SK-N-SH (cell line): ENCODE measurements at regions of chr17 and their contacts with region 1.

Region 1: DNA sequence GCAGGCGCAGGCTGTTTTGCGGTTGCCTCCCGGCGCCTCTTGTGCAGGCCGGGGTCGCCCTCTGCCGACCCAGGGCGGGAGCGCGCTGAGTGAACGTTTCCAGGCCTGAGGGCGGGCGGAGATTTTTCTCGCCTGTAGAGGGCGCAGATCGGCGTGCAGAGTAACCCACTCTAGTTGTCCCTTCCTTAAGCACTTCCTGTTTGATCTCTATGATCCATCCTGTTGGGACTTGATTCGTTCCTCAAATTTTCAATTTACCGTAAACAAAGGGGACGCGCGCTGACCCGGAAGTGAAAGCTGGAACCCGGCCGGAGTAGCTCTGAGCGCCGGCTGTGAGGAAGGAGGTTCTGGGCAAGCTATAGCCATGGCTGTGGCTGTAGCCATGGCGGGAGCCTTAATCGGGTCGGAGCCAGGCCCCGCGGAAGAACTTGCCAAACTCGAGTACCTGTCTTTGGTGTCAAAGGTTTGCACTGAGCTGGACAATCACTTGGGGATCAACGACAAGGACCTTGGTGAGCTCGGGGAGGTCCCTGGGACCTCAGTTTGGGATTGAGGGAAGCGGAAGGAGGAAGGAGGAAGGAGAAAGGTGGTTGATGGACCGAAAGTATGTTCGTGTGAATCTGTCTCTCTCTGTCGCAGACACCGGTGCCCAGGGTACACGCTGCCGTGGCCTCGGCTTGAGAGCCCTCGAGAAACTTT is at the start of gene DHX8:
- DNase-seq: peak; percentile 90
- H3K4me3 ChIP-seq: peak within 1 kb of the TSS; percentile 81 to 97
- H3K27ac ChIP-seq: peak within 1 kb of the TSS; percentile 81 to 87
- H3K4me1 ChIP-seq: peaks cover 3 to 8% of the 10 kb centered on the region in 2 experiments; a peak in 2 of 4 replicates
- H3K27me3 ChIP-seq: no peaks in the 10 kb centered on the region
- CTCF ChIP-seq: peak; percentile 100
- EP300 ChIP-seq: peak; percentile 8 to 72; a peak in 2 of 4 replicates
- RAD21 ChIP-seq: peak; percentile 100
- polyA plus RNA-seq, gene DHX8: 31.3 and 35.1 TPM in 2 replicates

Region 2: GRCh38 chr17:43381204-43381603 is 102.6 kb before region 1 on chr17:
- CTCF ChIA-PET with region 1: interaction called, 70 read pairs
- POLR2A ChIA-PET with region 1: no interaction called
- DNase-seq: no peak
- H3K4me3 ChIP-seq: no peak overlapping the region
- H3K27ac ChIP-seq: no peak overlapping the region
- H3K4me1 ChIP-seq: no peaks in the 10 kb centered on the region
- H3K27me3 ChIP-seq: no peaks in the 10 kb centered on the region
- CTCF ChIP-seq: no peak
- EP300 ChIP-seq: no peak
- RAD21 ChIP-seq: no peak

Region 3: GRCh38 chr17:43406676-43407645 is 76.9 kb before region 1 on chr17:
- CTCF ChIA-PET with region 1: interaction called, 30 read pairs
- POLR2A ChIA-PET with region 1: no interaction called
- DNase-seq: no peak
- H3K4me3 ChIP-seq: no peak overlapping the region
- H3K27ac ChIP-seq: peak overlapping the region; percentile 12 to 62; a peak in 3 of 4 replicates
- H3K4me1 ChIP-seq: peaks cover 11 to 14% of the 10 kb centered on the region in 2 experiments
- H3K27me3 ChIP-seq: no peaks in the 10 kb centered on the region
- CTCF ChIP-seq: no peak; the same call in 1 of the 2 replicates
- EP300 ChIP-seq: peak in 1 of 2 experiments; percentile 60; a peak in 1 of 4 replicates
- RAD21 ChIP-seq: no peak

Region 4: DNA sequence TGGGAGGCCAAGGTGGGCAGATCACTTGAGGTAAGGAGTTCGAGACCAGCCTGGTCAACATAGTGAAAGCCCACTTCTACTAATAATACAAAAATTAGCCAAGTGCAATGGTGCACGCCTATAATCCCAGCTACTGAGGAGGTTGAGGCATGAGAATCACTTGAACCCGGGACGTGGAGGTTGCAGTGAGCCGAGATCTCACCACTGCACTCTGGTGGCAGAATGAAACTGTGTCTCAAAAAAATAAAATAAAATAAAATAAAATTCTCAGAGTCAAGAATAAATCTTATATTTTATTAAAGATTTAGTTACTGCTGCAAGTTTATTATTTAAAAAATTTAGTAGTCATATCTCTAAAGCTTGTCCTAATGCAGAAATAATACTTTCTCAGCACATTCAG is 55.3 kb before region 1 on chr17:
- CTCF ChIA-PET with region 1: interaction called, 13 read pairs
- POLR2A ChIA-PET with region 1: no interaction called
- DNase-seq: no peak
- H3K4me3 ChIP-seq: no peak overlapping the region
- H3K27ac ChIP-seq: no peak overlapping the region
- H3K4me1 ChIP-seq: peaks cover 0 to 7% of the 10 kb centered on the region in 2 experiments; a peak in 1 of 4 replicates
- H3K27me3 ChIP-seq: no peaks in the 10 kb centered on the region
- CTCF ChIP-seq: peak; percentile 40
- EP300 ChIP-seq: no peak
- RAD21 ChIP-seq: peak; percentile 25; the same call in 1 of the 2 replicates

Region 5: DNA sequence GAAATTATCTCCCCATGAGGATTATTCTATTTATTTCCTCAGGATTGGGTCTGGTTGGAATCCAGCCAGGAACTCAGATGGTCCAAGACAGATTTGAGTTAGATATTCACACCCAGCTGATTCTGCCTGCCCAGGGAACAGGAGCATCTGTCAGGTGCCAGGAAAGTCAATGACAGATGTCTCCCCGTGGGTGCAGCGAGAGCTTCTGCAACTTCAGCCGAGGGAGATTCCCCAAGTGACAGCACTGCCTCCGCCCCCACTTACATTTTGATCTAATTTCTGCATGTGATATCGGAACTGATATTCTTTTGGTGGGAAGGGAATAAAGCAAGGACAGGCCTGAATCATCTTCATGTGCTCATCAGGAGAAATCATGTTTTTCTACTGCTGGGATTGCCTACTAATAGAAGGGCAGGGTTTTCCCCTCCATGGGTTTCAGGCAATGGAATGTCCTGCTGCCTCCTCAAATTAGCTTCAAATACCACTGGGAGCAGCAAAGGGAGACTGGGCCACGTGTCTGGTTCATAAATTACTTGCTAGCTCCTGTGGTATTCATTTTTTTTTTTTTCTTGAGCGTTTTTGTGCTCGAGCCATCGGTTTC is 15.7 kb before region 1 on chr17:
- CTCF ChIA-PET with region 1: interaction called, 51 read pairs
- POLR2A ChIA-PET with region 1: no interaction called
- DNase-seq: no peak
- H3K4me3 ChIP-seq: no peak overlapping the region
- H3K27ac ChIP-seq: peak overlapping the region; percentile 36 to 93; a peak in 3 of 4 replicates
- H3K4me1 ChIP-seq: peaks cover 4% of the 10 kb centered on the region in 2 experiments; a peak in 2 of 4 replicates
- H3K27me3 ChIP-seq: no peaks in the 10 kb centered on the region
- CTCF ChIP-seq: no peak
- EP300 ChIP-seq: peak in 1 of 2 experiments; percentile 84; a peak in 2 of 4 replicates
- RAD21 ChIP-seq: no peak